Psoas muscle (tissue), 8 donors: ENCODE measurements at regions of chr19 and their contacts with region 1.

Region 1: GRCh38 chr19:53467485-53468262 is at the start of gene ZNF813:
- DNase-seq: peak; percentile 93 to 94
- ATAC-seq: peak; percentile 96 to 99 (median 98)
- H3K4me3 ChIP-seq: peak within 1 kb of the TSS; percentile 82
- H3K27ac ChIP-seq: peak within 1 kb of the TSS; percentile 55
- H3K4me1 ChIP-seq: peaks cover 3% of the 10 kb centered on the region
- H3K27me3 ChIP-seq: peaks cover 0 to 28% (median 8%) of the 10 kb centered on the region in 3 donors
- CTCF ChIP-seq: no peak
- total RNA-seq, gene ZNF813: 0.42 to 1.7 (median 0.95) TPM

Region 2: DNA sequence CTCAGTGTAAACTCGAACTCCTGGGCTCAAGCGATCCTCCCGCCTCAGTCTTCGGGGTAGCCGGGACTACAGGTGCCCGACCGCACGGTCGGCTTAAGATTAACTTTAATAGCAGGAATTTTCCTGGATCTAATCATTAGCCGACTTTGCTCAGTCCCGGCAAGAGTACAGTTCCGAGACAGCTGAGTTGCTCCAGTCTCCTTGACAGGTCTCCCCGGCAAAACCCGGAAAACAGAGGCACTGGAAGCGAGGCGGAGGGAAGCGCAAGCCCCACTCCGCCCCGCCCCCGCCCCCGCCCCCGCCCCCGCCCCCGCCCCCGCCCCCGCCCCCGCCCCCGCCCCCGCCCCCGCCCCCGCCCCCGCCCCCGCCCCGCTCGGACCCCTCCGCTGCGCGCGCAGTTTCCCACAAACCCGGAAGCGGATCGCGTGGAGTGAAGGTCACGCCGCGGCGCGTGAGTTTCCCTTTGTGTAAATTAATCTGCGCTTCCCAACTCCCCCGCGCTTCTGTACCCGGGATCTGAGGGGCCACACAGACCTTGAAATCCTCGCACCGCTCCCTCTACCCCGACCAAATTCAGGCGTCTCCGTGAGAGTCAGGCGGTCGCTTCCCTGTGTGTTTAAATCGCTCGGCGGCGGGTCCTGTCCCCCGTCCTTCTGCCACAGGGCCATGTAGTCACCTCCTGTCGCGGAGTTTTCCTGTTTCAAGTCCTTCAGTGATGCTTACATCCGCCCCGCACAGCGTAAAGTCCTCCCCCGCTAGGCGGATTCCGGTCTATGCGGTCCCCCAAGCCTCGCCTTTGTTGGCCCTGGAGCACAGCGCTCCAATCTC is 1170.7 kb before region 1 on chr19 and contains the start of gene ZNF480:
- intact Hi-C with region 1: loop called in 1 of 2 experiments (anchors 5 kb)
- DNase-seq: peak; percentile 89 to 94
- ATAC-seq: peak; percentile 82 to 92 (median 86)
- H3K4me3 ChIP-seq: peak within 1 kb of the TSS; percentile 68
- H3K27ac ChIP-seq: peak within 1 kb of the TSS; percentile 82
- H3K4me1 ChIP-seq: peaks cover 8% of the 10 kb centered on the region
- H3K27me3 ChIP-seq: no peaks in the 10 kb centered on the region
- CTCF ChIP-seq: no peak
- total RNA-seq, gene ZNF480: 6.2 to 10.5 (median 7.0) TPM

Region 3: DNA sequence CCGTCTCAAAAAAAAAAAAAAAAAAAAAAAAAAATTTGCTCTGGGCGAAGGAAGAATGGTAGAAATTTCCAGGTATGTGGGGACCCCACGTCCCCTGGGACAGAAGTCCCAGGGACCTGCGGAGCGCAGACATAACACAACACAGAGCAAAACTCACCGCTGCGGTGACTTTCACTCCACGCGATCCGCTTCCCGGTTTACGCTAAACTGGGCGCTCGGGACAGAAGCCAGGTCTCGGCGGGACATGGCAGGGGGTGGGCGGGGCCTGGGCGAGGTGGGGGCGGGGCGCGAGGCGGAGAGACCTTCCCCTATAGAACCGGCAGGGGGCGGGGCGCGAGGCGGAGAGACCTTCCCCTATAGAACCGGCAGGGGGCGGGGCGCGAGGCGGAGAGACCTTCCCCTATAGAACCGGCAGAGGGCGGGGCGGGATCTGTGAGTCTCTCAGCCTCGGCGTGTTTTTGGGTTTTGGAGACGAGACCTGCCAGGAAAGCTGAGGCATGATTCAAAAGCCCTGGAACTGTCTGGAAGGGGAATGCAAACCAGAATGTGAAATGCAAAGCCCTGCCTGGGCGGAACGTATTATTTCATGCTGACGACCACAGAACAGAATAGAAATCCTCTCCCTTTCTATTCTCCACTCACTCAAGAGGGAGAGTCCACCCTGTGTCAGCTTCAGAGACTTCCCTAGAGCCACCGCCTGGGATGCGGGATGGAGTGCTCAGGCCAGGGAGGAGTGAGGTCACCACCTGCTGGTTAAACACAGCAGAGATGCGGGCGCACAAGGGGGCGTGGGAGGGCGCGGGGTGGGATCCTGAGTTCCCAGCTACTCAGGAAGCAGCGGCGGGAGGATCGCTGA is 474.1 kb before region 1 on chr19:
- intact Hi-C with region 1: loop called in 1 of 2 experiments (anchors 10 kb)
- DNase-seq: peak; percentile 70 to 79
- ATAC-seq: peak; percentile 59 to 80 (median 76)
- H3K4me3 ChIP-seq: peak overlapping the region; percentile 66
- H3K27ac ChIP-seq: peak overlapping the region; percentile 23
- H3K4me1 ChIP-seq: no peaks in the 10 kb centered on the region
- H3K27me3 ChIP-seq: peaks cover 0 to 1% (median 0%) of the 10 kb centered on the region in 3 donors
- CTCF ChIP-seq: peak; percentile 48

Region 4: DNA sequence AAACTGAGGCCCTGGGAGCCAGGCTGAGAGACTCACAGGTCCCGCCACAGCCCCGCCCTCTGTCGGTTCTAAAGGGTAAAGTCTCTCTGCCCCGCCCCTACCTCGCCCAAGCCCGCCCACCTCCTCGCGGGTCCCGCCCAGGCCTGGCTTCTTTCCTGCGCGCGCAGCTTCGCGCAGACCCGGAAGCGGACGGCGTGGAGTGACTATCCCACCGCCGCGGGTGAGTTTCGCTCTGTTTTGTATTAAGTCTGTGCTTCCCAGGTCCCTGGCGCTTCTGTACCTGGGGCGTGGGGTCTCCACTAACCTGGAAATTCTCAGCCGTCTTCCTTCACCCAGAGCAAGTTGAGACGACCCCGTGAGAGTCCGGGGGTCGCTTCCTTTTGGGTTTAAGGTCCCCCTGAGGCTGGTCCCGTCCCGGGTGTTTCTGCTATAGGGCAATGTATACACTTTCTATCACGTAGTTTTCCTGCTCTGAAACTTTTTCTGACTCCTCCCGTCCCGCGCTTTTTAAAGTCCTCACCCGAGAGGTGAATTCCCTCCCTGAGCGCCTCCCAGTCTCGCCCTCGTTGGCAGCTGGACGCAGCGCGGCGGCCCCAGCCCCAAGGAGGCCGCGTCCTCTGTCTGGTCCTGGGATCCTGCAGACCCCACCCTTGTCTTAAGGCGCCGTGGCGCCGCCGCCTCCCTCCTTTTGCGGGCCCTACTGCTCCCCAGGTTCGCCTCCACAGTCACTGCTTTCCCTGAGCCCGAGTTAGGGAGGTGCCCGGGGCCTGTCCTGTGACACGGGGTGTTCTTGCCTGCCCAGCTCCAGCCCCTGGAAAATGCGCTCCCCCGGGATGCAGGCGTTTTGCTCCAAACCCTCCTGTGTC is 72.5 kb before region 1 on chr19 and contains the start of gene ZNF765:
- intact Hi-C with region 1: loop called in 1 of 2 experiments (anchors 10 kb)
- DNase-seq: peak; percentile 94 to 96
- ATAC-seq: peak; percentile 100
- H3K4me3 ChIP-seq: peak within 1 kb of the TSS; percentile 87
- H3K27ac ChIP-seq: peak within 1 kb of the TSS; percentile 57
- H3K4me1 ChIP-seq: peaks cover 5% of the 10 kb centered on the region
- H3K27me3 ChIP-seq: no peaks in the 10 kb centered on the region
- CTCF ChIP-seq: peak; percentile 43
- total RNA-seq, gene ZNF765: 1.8 to 2.9 (median 2.6) TPM

Region 5: GRCh38 chr19:53431399-53432087 is 36.1 kb before region 1 on chr19 and contains the start of gene ZNF761:
- intact Hi-C with region 1: loop called (anchors 1 to 5 kb)
- DNase-seq: peak; percentile 94 to 97
- ATAC-seq: peak; percentile 100
- H3K4me3 ChIP-seq: peak within 1 kb of the TSS; percentile 72
- H3K27ac ChIP-seq: peak within 1 kb of the TSS; percentile 66
- H3K4me1 ChIP-seq: no peaks in the 10 kb centered on the region
- H3K27me3 ChIP-seq: no peaks in the 10 kb centered on the region
- CTCF ChIP-seq: peak; percentile 34
- total RNA-seq, gene ZNF761: 1.5 to 4.4 (median 3.6) TPM